Common myeloid progenitor, CD34-positive (primary cell): ENCODE measurements at regions of chr6 and their contacts with region 1.

Region 1: DNA sequence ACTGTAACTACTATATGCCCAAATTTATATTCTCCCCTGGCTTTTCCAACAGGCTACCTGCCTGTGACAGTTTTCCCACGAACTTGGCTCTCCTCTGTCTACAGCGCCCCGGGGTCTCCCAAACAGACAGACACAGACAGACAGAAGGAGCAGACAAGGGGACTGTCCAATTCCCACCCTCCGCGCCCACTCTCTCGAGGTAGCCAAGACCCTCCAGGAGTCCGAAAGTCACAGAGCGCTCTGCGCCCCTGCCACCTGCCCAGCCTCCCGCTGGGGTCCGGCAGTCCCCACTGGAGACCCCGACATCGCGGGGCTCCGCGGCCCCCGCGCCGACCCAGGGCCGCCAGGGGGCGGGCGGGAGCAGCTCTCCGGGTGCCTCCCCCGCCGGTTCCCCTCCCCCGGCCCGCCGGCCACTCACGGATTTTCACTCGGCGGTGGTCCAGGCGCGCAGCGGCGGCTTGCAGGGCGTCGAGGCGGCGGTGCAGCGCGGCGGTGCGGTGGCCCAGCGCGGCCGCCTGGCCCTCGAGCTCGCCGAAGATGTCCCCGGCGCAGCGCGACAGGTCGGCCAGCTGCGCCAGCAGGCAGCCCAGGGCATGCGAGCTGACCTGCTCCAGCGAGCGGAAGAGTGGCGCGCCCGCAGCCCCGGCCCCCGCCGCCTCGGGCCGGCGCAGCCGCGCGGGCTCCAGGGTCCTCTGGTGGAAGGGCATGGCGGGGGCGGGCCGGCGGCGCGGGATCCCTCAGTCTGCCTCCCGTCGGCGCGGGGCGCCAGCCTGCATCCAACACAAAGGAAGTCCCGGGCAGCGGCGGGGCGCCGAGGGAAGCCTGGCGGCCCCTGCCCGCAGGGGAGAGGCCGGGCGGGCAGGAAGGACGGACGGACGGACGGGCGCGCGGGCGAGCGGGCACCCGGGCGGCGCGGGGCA is 81.3 kb upstream of the CCDC28A start:
- DNase-seq: peak; percentile 45 to 69 (median 62)
- H3K4me3 ChIP-seq: peak overlapping the region; percentile 64 to 90 (median 79)
- H3K27ac ChIP-seq: no peak overlapping the region
- H3K4me1 ChIP-seq: peaks cover 0 to 13% (median 9%) of the 10 kb centered on the region in 4 experiments
- H3K27me3 ChIP-seq: peaks cover 0 to 6% (median 0%) of the 10 kb centered on the region in 5 experiments

Region 2: GRCh38 chr6:138765896-138766655 is 73.8 kb after region 1 on chr6:
- CTCF ChIA-PET with region 1: interaction called, 11 read pairs
- POLR2A ChIA-PET with region 1: no interaction called
- DNase-seq: peak; percentile 49 to 79 (median 73)
- H3K4me3 ChIP-seq: no peak overlapping the region
- H3K27ac ChIP-seq: no peak overlapping the region
- H3K4me1 ChIP-seq: peaks cover 6 to 24% (median 17%) of the 10 kb centered on the region in 4 experiments
- H3K27me3 ChIP-seq: no peaks in the 10 kb centered on the region

Region 3: GRCh38 chr6:138923561-138923960 is 231.2 kb after region 1 on chr6:
- CTCF ChIA-PET with region 1: no interaction called
- POLR2A ChIA-PET with region 1: no interaction called
- DNase-seq: no peak
- H3K4me3 ChIP-seq: no peak overlapping the region
- H3K27ac ChIP-seq: no peak overlapping the region
- H3K4me1 ChIP-seq: no peaks in the 10 kb centered on the region
- H3K27me3 ChIP-seq: no peaks in the 10 kb centered on the region